Pancreas (tissue), 10 donors: ENCODE measurements at regions of chr6 and their contacts with region 1.

Region 1: DNA sequence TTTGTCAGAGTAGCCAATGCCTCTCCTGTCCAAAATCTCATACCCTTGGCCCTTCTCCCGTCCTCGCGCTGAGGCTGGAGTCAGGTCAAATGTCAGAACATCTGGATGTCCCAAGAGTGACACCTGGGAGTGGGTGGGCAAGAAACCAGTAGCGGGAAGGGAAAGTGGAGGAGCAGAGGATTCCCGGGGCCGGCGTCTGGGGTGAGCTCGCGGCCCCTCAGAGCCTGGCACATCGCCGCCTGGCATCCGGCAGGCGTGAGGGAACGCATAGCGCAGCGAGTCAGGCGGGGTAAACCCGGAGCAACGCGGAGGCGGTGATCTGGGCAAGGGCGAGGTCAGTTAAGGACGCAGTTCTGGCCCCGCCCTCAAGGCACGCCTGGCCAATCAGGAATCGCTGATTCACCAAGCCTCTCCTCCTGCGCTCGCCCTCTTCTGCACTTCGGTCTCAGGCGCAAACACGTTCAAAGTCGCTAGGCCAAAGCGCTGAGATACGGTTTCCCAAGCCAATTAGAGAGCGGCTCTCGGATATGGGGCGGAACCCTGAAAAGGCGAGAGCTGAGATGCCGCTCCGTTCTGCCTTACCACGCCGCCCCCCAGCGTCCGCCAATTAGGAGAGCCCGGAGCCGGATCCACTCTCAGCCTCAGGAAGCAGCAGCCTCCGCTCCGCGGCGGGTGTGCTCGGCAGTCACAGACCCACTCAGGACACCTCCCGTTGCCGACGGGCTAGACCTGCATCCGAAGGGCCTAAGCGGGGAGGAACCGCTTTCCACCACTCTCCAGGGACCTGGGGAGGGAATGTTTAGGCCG is 22.5 kb downstream of the VPS52 start:
- DNase-seq: peak; percentile 91 to 99 (median 98)
- ATAC-seq: peak; percentile 92 to 97 (median 94)
- H3K4me3 ChIP-seq: peak overlapping the region; percentile 24 to 54 (median 38)
- H3K27ac ChIP-seq: peak overlapping the region; percentile 73 to 87 (median 82)
- H3K4me1 ChIP-seq: peaks cover 0 to 6% (median 0%) of the 10 kb centered on the region in 3 donors
- H3K27me3 ChIP-seq: no peaks in the 10 kb centered on the region
- CTCF ChIP-seq: no peak

Region 2: DNA sequence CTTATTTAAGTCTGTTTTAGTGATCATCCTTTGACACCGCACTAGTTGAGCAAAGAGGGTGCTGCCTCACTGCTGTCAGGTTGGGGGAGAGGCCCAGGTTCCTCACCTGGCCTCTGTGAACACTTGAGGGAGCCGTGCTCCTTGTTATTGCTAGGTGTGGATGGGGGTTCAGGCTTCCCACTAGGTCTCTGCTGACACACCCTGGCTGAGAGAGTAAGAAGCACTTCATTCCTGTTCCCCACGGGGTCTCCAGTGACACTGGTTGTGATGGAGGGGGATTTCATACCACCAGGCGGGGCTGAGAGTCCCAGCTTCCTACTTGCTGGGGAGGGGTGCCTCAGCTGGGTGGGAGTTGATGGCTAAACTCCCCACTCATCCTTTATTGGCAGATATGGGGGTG is 1014.2 kb before region 1 on chr6:
- intact Hi-C with region 1: no loop called
- DNase-seq: no peak
- ATAC-seq: no peak
- H3K4me3 ChIP-seq: no peak overlapping the region
- H3K27ac ChIP-seq: no peak overlapping the region
- H3K4me1 ChIP-seq: no peaks in the 10 kb centered on the region
- H3K27me3 ChIP-seq: no peaks in the 10 kb centered on the region
- CTCF ChIP-seq: no peak

Region 3: DNA sequence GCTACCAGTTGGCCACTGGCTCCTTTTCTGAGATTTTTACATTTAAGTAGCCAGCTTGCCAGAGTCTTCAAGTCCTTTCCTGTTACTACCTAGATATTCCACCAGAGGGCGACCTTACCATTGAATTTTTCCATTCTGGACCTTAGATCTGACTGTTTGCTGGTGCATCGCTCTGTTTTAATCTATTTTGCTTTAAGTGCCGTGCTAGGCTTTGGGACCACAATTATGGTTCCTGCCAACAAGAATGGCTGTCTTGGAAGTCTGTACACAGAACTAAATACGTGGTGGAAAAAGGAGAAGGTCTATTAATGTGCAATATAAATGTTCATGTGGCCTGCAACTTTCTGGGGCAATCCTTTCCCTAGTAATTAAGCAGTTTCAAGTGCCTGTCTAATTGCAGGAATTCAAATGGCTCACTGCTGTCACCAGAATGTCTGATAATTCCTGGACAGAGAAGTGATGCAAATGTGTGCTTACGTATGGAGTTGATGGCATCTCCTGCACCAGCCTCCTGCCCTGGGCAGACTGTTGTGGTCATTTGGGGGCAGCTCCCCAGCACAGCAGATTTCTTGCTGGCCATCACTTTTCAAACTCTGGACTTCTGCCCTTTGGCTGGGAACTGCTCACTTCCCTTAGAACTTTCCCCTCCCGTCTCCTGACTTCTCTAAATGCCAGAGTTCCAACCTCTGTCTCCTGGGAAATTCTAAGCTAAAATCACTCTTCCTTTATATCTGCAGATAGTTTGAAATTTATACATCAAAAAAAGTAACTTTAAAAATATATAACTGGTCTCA is 234.1 kb before region 1 on chr6:
- intact Hi-C with region 1: loop called in 1 of 3 experiments (anchors 5 kb)
- DNase-seq: peak in 3 of 6 donors; percentile 45 to 65 (median 47)
- ATAC-seq: peak; percentile 69 to 77 (median 74)
- H3K4me3 ChIP-seq: no peak overlapping the region
- H3K27ac ChIP-seq: no peak overlapping the region
- H3K4me1 ChIP-seq: peaks cover 0 to 11% (median 9%) of the 10 kb centered on the region in 3 donors
- H3K27me3 ChIP-seq: no peaks in the 10 kb centered on the region
- CTCF ChIP-seq: peak; percentile 73 to 82 (median 76)

Region 4: GRCh38 chr6:33161354-33162331 is 87.5 kb before region 1 on chr6:
- intact Hi-C with region 1: loop called in 1 of 3 experiments (anchors 5 kb)
- DNase-seq: peak; percentile 71 to 95 (median 83)
- ATAC-seq: peak; percentile 96 to 98 (median 98)
- H3K4me3 ChIP-seq: peak overlapping the region; percentile 36 to 48 (median 42)
- H3K27ac ChIP-seq: no peak overlapping the region
- H3K4me1 ChIP-seq: no peaks in the 10 kb centered on the region
- H3K27me3 ChIP-seq: no peaks in the 10 kb centered on the region
- CTCF ChIP-seq: peak; percentile 90 to 96 (median 93)